ENCODE measurements at regions of chr12 and their contacts with region 1.

Region 1: DNA sequence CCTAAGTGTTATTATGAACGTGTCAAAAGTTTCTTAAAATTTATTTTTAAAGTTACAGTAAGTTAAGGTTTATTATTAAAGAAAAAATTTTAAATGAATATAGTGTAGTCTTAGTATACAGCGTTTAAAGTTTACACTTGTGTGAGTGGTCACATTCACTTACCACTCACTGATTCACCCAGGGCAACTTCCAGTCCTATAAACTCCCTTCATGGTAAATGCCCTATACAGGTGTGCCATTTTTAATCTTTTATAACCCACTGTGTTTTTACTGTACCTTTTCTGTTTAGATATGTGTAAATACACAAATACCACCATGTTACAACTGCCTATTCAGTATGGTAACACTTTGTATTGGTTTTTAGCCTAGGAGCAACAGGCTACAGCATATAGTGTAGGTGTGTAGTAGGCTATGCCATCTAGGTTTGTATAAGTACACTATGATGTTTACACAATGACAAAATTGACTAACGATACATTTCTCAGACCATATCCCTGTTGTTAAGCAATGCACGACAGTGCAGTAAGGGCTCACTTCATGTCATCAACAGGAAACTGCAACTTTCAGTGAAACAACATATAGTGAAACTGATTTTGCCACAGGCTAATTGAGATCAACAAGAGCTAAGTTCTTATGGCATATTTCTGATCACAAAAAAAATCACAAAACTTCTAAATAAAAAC is 112.0 kb upstream of the TMCC3 start:
- DNase-seq: no peak
- ATAC-seq: no peak
- H3K4me3 ChIP-seq: no peak overlapping the region
- H3K27ac ChIP-seq: no peak overlapping the region
- H3K4me1 ChIP-seq: no peaks in the 10 kb centered on the region
- H3K27me3 ChIP-seq: peaks cover 0 to 4% of the 10 kb centered on the region in 2 experiments; a peak in 1 of 5 replicates
- CTCF ChIP-seq: no peak
- EP300 ChIP-seq: no peak
- POLR2A ChIP-seq: no peak
- RAD21 ChIP-seq: no peak

Region 2: GRCh38 chr12:94133964-94134795 is 628.2 kb before region 1 on chr12:
- CTCF ChIA-PET with region 1: no interaction called
- POLR2A ChIA-PET with region 1: no interaction called
- in situ Hi-C with region 1: loop called (anchors 25 kb)
- intact Hi-C with region 1: no loop called
- DNase-seq: peak; percentile 47
- ATAC-seq: peak; percentile 72
- H3K4me3 ChIP-seq: no peak overlapping the region
- H3K27ac ChIP-seq: no peak overlapping the region
- H3K4me1 ChIP-seq: peaks cover 6% of the 10 kb centered on the region; the same call in 1 of the 2 replicates
- H3K27me3 ChIP-seq: peaks cover 0 to under 1% of the 10 kb centered on the region in 2 experiments; a peak in 2 of 5 replicates
- CTCF ChIP-seq: peak; percentile 64
- EP300 ChIP-seq: no peak
- POLR2A ChIP-seq: no peak
- RAD21 ChIP-seq: peak; percentile 47; the same call in 1 of the 2 replicates

Region 3: DNA sequence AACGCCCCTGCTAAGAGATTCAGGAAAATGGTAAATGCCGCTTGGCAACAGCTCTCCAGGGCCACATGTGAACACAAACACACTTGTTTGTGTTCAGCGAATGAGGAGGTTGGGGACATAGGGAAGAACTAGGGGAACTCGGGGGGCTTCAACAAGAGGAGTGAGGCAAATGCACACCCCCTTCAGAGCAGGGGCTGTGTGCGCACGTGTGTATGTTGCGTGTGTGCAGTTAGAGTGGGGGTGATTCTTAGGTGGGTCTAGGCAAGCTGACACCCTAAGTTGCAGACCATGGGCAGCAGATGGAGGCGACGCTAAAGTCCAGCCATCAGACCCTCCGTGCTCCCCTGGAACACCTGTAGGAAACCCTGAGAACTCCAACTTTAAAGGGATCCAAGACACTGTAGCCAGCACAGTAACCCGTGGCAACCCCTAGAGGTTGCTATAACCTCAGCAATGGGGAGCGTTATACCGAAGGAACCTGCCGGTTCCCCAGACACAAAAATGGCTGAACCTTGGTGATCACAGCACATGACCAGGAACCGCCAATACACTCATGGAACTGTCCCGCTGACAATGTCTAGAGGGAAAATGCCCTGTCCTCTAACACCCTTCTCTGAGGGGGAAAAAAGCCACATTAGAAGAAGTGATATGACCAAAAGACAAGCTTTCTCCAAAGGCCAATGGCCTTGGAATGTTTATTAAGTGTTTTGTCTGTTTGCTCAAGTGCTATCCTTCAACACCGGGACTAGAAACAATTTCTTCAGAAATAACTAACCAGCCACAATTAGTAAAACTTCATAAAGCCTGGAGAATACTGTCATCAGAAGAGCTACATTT is 216.2 kb before region 1 on chr12:
- CTCF ChIA-PET with region 1: interaction called, 6 read pairs
- POLR2A ChIA-PET with region 1: no interaction called
- in situ Hi-C with region 1: loop called (anchors 10 kb)
- intact Hi-C with region 1: loop called (anchors 5 kb)
- DNase-seq: peak; percentile 44
- ATAC-seq: peak; percentile 97
- H3K4me3 ChIP-seq: no peak overlapping the region
- H3K27ac ChIP-seq: no peak overlapping the region
- H3K4me1 ChIP-seq: no peaks in the 10 kb centered on the region
- H3K27me3 ChIP-seq: peaks cover 0 to 2% of the 10 kb centered on the region in 2 experiments; a peak in 1 of 5 replicates
- CTCF ChIP-seq: peak; percentile 73
- EP300 ChIP-seq: no peak
- POLR2A ChIP-seq: no peak
- RAD21 ChIP-seq: peak; percentile 82

Region 4: DNA sequence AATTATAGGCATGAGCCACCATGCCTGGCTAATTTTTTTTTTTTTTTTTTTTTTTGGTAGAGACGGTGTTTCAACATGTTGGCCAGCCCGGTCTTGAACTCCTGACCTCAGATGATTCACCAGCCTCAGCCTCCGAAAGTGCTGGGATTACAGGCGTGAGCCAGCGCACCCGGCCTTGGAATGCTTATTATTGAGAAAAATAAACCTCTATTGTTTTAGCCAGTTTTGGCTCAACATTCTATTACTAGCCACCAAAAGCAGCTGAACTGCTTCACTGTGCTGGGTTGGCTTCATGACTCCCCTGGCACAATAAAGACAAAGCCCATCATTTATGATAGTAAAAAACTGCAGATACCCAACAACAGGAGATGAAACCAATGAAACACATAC is 209.3 kb before region 1 on chr12:
- CTCF ChIA-PET with region 1: no interaction called
- POLR2A ChIA-PET with region 1: no interaction called
- in situ Hi-C with region 1: loop called (anchors 10 kb)
- intact Hi-C with region 1: loop called (anchors 5 kb)
- DNase-seq: no peak
- ATAC-seq: no peak
- H3K4me3 ChIP-seq: no peak overlapping the region
- H3K27ac ChIP-seq: no peak overlapping the region
- H3K4me1 ChIP-seq: no peaks in the 10 kb centered on the region
- H3K27me3 ChIP-seq: 0 out of 5 replicates have a peak, but pooled peaks cover 0 to 1% of the 10 kb centered on the region in 2 experiments
- CTCF ChIP-seq: no peak
- EP300 ChIP-seq: no peak
- POLR2A ChIP-seq: no peak
- RAD21 ChIP-seq: no peak

Region 5: GRCh38 chr12:94603434-94604365 is 158.7 kb before region 1 on chr12:
- CTCF ChIA-PET with region 1: no interaction called
- POLR2A ChIA-PET with region 1: no interaction called
- in situ Hi-C with region 1: no loop called
- intact Hi-C with region 1: loop called (anchors 1 kb)
- DNase-seq: peak; percentile 5
- ATAC-seq: peak; percentile 63
- H3K4me3 ChIP-seq: no peak overlapping the region
- H3K27ac ChIP-seq: no peak overlapping the region
- H3K4me1 ChIP-seq: no peaks in the 10 kb centered on the region
- H3K27me3 ChIP-seq: 0 out of 5 replicates have a peak, but pooled peaks cover 0 to 3% of the 10 kb centered on the region in 2 experiments
- CTCF ChIP-seq: peak; percentile 68
- EP300 ChIP-seq: no peak
- POLR2A ChIP-seq: no peak
- RAD21 ChIP-seq: peak; percentile 41

Region 6: GRCh38 chr12:94725375-94726168 is 36.8 kb before region 1 on chr12:
- CTCF ChIA-PET with region 1: no interaction called
- POLR2A ChIA-PET with region 1: no interaction called
- in situ Hi-C with region 1: no loop called
- intact Hi-C with region 1: no loop called
- DNase-seq: peak; percentile 23
- ATAC-seq: peak; percentile 65
- H3K4me3 ChIP-seq: no peak overlapping the region
- H3K27ac ChIP-seq: no peak overlapping the region
- H3K4me1 ChIP-seq: no peaks in the 10 kb centered on the region
- H3K27me3 ChIP-seq: no peaks in the 10 kb centered on the region
- CTCF ChIP-seq: peak; percentile 38
- EP300 ChIP-seq: no peak
- POLR2A ChIP-seq: no peak
- RAD21 ChIP-seq: no peak

Region 7: DNA sequence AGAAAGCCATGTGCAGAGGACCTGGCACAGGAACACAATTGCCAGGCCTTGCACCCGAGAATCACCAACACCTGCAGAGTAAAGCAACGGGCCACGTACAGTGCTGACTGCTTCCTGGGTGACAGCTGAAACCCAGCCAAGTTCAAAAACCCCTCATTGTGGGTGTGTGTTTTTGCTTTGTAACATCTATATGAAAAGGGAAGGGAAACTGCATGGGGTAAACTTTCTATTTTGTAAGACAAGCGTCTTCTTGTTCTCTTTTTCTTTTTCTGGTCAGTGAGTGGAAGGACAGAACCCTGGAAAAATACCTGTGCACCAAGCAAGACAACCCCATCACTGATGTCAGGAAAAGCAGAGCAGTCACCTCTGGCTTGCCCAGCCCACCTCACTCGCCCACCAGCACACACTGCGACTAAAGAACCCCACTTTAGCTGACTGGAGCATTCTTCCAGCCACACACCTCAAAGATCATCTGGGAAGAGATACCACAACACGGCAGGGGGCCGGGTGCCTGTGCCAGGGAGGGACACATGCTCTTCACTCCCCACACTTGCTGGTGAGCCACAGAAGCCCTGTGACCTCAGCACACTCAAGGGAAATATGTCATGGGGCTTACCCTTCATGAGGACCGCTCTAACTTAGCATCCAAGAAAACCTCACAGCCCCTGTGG is 68.8 kb after region 1 on chr12:
- CTCF ChIA-PET with region 1: no interaction called
- POLR2A ChIA-PET with region 1: no interaction called
- in situ Hi-C with region 1: no loop called
- intact Hi-C with region 1: no loop called
- DNase-seq: no peak
- ATAC-seq: no peak; the same call in 2 of the 3 replicates
- H3K4me3 ChIP-seq: no peak overlapping the region
- H3K27ac ChIP-seq: no peak overlapping the region
- H3K4me1 ChIP-seq: peaks cover 5% of the 10 kb centered on the region; the same call in 1 of the 2 replicates
- H3K27me3 ChIP-seq: no peaks in the 10 kb centered on the region; a peak in 1 of 5 replicates
- CTCF ChIP-seq: no peak
- EP300 ChIP-seq: no peak
- POLR2A ChIP-seq: no peak
- RAD21 ChIP-seq: no peak

Region 8: DNA sequence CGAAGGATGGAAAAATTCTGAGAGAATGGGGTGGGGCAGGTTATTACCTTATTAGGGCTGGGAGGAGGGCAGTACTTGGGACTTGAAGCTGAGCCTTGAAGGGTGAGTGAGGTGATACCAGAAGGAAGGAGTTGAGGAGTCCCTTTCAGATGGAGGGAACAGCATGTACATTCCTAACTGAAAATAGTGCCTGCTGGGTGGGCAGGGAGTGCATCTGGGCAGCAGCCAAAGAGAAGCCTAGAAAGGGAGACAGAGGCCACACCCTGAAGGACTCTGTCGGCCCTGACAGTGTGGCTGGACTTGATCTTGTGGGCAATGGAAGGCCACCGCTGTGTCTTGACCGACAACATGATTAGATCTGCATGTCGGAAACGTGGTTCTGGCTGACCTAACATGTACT is 93.5 kb after region 1 on chr12:
- CTCF ChIA-PET with region 1: no interaction called
- POLR2A ChIA-PET with region 1: no interaction called
- in situ Hi-C with region 1: no loop called
- intact Hi-C with region 1: no loop called
- DNase-seq: no peak
- ATAC-seq: no peak
- H3K4me3 ChIP-seq: no peak overlapping the region
- H3K27ac ChIP-seq: no peak overlapping the region
- H3K4me1 ChIP-seq: no peaks in the 10 kb centered on the region
- H3K27me3 ChIP-seq: 0 out of 5 replicates have a peak, but pooled peaks cover 0 to 10% of the 10 kb centered on the region in 2 experiments
- CTCF ChIP-seq: no peak
- EP300 ChIP-seq: no peak
- POLR2A ChIP-seq: no peak
- RAD21 ChIP-seq: no peak

Measured in HepG2 (cell line).